ENCODE measurements at regions of chr17 and their contacts with region 1.

Region 1: DNA sequence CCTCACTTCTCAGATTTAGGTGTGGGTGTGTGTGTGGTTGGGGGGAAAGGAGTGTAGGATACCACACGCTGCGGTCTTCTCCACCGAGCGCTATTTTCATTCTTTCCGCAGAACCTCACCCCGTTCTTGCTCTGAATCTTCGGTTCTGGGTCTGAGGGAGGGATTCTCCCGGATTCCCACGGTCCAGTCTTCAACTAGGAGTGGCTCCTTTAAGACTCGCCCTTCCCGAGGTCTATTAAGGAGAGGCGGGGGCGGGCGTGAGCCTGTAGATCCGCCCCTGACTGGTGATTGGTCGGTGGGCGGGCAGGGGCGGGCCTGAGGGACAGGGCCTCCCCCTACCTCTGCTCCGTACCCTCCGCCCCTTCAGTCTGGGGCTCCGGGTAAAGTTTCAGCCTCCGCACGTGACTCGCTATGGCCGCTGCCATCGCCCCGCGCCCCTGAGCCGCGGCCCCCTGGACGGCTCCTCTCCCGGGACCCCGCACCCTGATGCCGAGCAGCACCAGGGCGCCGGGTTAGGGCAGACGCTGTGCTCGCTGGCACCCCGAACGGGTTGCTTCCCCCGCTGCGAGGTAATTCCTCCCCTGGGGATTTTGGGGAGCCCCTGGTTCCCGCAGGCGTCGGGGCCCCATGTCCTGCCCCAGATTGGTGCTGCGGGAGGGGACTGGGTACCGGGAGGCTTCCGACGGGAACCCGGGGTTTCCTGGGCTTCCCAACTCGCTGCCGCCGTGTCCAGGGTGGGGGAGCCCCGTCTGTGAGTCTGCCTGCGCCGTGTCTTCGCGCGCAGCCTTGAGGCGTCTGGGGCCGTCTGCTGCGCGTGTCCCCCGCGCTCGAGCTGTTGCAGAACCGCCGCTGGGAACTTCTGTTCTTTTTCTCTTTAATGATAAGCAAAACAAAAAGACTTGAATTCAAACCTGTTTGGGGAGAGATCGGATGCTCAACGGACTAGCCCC is 9.2 kb downstream of the RARA start:
- DNase-seq: peak; percentile 96
- ATAC-seq: peak; percentile 93
- H3K4me3 Mint-ChIP-seq: peak overlapping the region; percentile 90
- H3K27ac Mint-ChIP-seq: peak overlapping the region; percentile 97
- H3K4me1 Mint-ChIP-seq: peaks cover 74% of the 10 kb centered on the region
- H3K27me3 Mint-ChIP-seq: peaks cover 22% of the 10 kb centered on the region
- CTCF ChIP-seq: no peak

Region 2: DNA sequence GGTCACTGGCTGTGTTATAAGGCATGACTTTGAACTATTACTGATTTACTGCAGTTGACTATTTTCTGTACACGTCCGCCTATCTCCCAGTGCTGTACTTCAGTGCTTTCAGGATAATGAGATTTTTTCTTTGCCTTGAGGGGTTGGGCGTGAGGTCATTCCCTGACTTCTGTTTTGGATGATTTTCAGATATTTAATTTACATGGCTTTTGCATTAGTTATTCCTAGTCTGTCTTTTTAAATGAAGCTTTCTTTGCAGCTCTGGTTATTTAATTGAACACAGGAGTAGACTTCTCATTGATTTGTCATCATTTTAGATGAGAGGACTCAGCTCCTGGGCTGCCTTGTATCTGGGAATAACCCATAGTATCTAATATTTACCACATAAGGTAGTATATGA is 75.4 kb before region 1 on chr17:
- CTCF ChIA-PET with region 1: interaction called, 15 read pairs
- POLR2A ChIA-PET with region 1: no interaction called
- DNase-seq: no peak
- ATAC-seq: no peak
- H3K4me3 Mint-ChIP-seq: no peak overlapping the region
- H3K27ac Mint-ChIP-seq: no peak overlapping the region
- H3K4me1 Mint-ChIP-seq: no peaks in the 10 kb centered on the region
- H3K27me3 Mint-ChIP-seq: no peaks in the 10 kb centered on the region
- CTCF ChIP-seq: no peak

Region 3: GRCh38 chr17:40295488-40296436 is 22.4 kb before region 1 on chr17:
- CTCF ChIA-PET with region 1: interaction called, 14 read pairs
- POLR2A ChIA-PET with region 1: no interaction called
- DNase-seq: no peak
- ATAC-seq: peak; percentile 86
- H3K4me3 Mint-ChIP-seq: peak overlapping the region; percentile 35
- H3K27ac Mint-ChIP-seq: peak overlapping the region; percentile 92
- H3K4me1 Mint-ChIP-seq: peaks cover 43% of the 10 kb centered on the region
- H3K27me3 Mint-ChIP-seq: no peaks in the 10 kb centered on the region
- CTCF ChIP-seq: no peak

Region 4: GRCh38 chr17:40303009-40303657 is 15.0 kb before region 1 on chr17:
- CTCF ChIA-PET with region 1: interaction called, 117 read pairs
- POLR2A ChIA-PET with region 1: interaction called, 17 read pairs
- DNase-seq: peak; percentile 48
- ATAC-seq: no peak
- H3K4me3 Mint-ChIP-seq: no peak overlapping the region
- H3K27ac Mint-ChIP-seq: no peak overlapping the region
- H3K4me1 Mint-ChIP-seq: peaks cover 10% of the 10 kb centered on the region
- H3K27me3 Mint-ChIP-seq: no peaks in the 10 kb centered on the region
- CTCF ChIP-seq: peak; percentile 23

Region 5: DNA sequence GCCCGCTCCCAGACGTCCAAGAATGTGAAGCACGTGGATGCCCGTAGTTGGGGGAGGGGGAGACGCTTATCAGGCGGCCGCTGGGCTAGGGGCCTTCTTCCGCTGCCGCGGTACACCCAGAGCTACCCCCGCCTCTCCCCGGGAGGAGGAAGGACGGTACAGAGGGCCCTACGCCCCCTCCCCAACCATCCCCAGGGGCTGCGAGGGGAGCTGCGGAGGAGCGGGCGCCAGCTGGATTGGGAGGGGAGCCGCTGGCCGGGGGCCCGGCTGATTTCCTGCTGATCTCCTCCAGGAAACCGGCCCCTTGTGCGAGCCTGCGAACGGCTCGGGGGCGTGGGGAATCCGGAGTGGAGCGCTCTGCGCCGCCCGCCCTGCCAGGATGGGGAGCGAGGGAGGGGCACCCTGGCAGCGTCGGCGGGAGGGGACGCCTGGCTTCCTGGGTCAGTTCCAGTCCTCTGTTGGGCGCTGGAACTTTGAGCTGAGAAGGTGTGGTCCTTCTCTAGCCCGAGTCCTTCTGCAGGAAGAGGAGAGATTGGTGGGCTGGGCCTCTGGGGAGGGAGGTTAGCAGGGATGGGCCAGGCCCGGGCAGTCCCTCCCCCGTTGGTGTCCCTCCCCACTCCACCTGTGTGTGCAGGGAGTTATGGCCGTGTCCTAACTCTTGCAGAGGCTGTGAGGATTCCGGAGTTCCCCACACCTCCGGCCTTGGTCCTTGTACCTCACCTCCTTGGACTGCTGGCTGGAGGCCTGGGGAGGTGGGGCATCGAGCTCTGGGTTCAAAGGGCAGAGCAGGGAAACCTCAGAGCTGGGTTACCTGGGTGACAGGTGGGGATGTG is 27.2 kb after region 1 on chr17:
- CTCF ChIA-PET with region 1: interaction called, 56 read pairs
- POLR2A ChIA-PET with region 1: interaction called, 5 read pairs
- DNase-seq: peak; percentile 85
- ATAC-seq: peak; percentile 36
- H3K4me3 Mint-ChIP-seq: peak overlapping the region; percentile 76
- H3K27ac Mint-ChIP-seq: no peak overlapping the region
- H3K4me1 Mint-ChIP-seq: peaks cover 69% of the 10 kb centered on the region
- H3K27me3 Mint-ChIP-seq: peaks cover 59% of the 10 kb centered on the region
- CTCF ChIP-seq: no peak

Measured in WTC11 (cell line).